Heart left ventricle (tissue), 16 donors: ENCODE measurements at regions of chr2 and their contacts with region 1.

Region 1: DNA sequence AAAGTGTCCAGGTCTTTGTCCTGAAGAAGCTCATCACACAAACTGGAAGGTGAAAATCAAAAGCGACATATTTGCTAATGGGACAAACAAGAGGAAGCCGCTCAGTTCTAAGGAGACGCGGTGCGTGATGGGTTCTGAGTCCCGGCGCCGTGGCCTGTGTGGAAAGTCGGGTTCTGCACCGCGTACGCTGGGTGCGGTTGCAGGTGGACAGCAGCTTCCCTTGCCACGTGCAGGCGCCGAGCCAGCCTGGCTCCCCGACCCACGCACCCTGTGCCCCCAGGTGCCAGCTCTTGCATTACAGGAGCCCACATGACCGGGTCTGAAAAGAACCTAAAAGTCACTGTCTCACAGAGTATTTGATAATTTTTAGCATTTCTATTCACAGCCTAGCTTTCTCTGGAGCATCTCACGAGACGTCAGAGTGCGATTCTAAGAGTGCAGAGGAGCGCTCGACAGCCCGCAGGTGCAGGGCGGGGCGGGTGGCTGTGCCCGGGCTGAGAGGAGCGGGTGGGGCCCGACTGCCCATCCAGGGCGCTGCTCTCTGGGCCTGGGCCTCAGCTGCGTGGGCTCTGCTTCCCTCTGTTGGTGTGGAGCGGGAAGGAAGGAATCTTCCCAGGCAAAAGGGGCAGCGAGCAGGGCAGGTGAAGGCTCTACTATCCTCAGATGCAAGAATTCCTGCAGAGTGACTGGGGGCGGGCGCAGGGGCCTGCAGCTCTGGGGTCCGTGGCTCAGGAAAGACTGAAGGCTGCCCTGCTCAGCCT is 39.4 kb downstream of the MYT1L start:
- DNase-seq: peak in 1 of 5 donors; percentile 40
- ATAC-seq: peak; percentile 73 to 95 (median 92)
- H3K4me3 ChIP-seq: no peak overlapping the region
- H3K27ac ChIP-seq: no peak overlapping the region
- H3K4me1 ChIP-seq: no peaks in the 10 kb centered on the region
- H3K27me3 ChIP-seq: peaks cover 0 to 31% (median 0%) of the 10 kb centered on the region in 9 donors
- CTCF ChIP-seq: peak in 11 of 12 donors; percentile 42 to 70 (median 65)
- POLR2A ChIP-seq: no peak

Region 2: GRCh38 chr2:1854729-1855547 is 436.7 kb before region 1 on chr2:
- intact Hi-C with region 1: loop called in 1 of 10 experiments (anchors 10 kb)
- DNase-seq: no peak
- ATAC-seq: peak; percentile 47 to 95 (median 86)
- H3K4me3 ChIP-seq: peak overlapping the region in 1 of 12 donors; percentile 18
- H3K27ac ChIP-seq: no peak overlapping the region
- H3K4me1 ChIP-seq: peaks cover 0 to 6% (median 0%) of the 10 kb centered on the region in 12 donors
- H3K27me3 ChIP-seq: peaks cover 8 to 58% (median 22%) of the 10 kb centered on the region in 9 donors
- CTCF ChIP-seq: peak; percentile 13 to 70 (median 58)
- POLR2A ChIP-seq: no peak

Region 3: DNA sequence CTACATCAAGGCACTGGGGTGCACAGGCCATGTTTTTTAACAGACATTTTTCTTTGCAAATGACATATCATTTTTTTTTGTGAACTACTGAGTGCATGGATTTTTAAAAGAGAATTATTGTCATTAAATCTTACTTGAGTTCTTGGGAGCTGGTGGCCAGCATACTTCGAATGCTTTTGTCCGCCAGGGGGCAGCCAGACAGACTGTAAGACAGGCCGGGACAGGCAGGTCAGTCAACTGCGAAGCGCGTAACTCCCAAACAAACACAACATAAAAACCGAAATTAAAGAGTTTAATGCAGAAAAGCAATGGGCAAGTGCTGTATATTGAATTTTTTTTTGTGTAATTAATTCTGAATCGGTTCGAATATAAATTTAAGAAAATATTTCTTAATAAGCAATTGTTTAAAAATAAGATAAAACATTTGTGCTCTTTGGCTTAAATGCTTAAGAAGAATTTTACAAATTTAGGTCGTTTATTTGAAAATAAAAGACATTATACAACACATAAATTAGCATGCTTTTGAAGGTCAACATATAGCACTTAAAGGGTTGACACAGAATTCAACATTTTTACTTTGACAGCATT is 405.2 kb before region 1 on chr2:
- intact Hi-C with region 1: loop called in 5 of 10 experiments (anchors 2 to 10 kb)
- DNase-seq: peak; percentile 54 to 80 (median 77)
- ATAC-seq: peak in 2 of 4 donors; percentile 51 to 59
- H3K4me3 ChIP-seq: no peak overlapping the region
- H3K27ac ChIP-seq: no peak overlapping the region
- H3K4me1 ChIP-seq: peaks cover 0 to 9% (median 0%) of the 10 kb centered on the region in 12 donors
- H3K27me3 ChIP-seq: peaks cover 0 to 8% (median 0%) of the 10 kb centered on the region in 9 donors
- CTCF ChIP-seq: peak; percentile 55 to 83 (median 69)
- POLR2A ChIP-seq: no peak

Region 4: GRCh38 chr2:2112416-2113105 is 179.1 kb before region 1 on chr2:
- intact Hi-C with region 1: loop called in 1 of 10 experiments (anchors 5 kb)
- DNase-seq: no peak
- ATAC-seq: no peak
- H3K4me3 ChIP-seq: no peak overlapping the region
- H3K27ac ChIP-seq: no peak overlapping the region
- H3K4me1 ChIP-seq: peaks cover 0 to 17% (median 8%) of the 10 kb centered on the region in 12 donors
- H3K27me3 ChIP-seq: peaks cover 0 to 10% (median 0%) of the 10 kb centered on the region in 9 donors
- CTCF ChIP-seq: no peak
- POLR2A ChIP-seq: no peak

Region 5: DNA sequence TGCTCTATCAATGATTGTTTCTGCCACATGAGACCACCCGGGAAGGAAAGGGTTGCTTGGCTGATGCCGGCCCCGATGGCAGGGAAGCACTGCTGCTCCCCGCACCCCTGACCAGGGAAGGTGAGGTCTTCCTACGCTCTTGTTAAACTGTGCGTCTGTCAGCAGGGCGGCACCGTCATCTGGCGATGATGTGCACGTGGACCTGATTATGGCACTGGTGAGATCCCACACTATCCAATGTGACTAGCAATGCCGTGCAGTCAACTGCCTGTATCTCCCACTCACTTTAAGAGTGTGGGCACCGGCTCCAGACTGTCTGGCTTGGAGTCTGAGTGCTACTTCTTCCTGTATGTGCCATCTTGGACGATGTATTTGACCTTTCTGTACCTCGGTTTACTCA is 169.8 kb before region 1 on chr2:
- intact Hi-C with region 1: loop called in 9 of 10 experiments (anchors 2 to 10 kb)
- DNase-seq: no peak
- ATAC-seq: no peak
- H3K4me3 ChIP-seq: no peak overlapping the region
- H3K27ac ChIP-seq: no peak overlapping the region
- H3K4me1 ChIP-seq: peaks cover 0 to 3% (median 0%) of the 10 kb centered on the region in 12 donors
- H3K27me3 ChIP-seq: no peaks in the 10 kb centered on the region
- CTCF ChIP-seq: no peak
- POLR2A ChIP-seq: no peak

Region 6: GRCh38 chr2:2127467-2127866 is 164.2 kb before region 1 on chr2:
- intact Hi-C with region 1: loop called in 7 of 10 experiments (anchors 5 to 10 kb)
- DNase-seq: no peak
- ATAC-seq: no peak
- H3K4me3 ChIP-seq: no peak overlapping the region
- H3K27ac ChIP-seq: no peak overlapping the region
- H3K4me1 ChIP-seq: no peaks in the 10 kb centered on the region
- H3K27me3 ChIP-seq: peaks cover 0 to 7% (median 0%) of the 10 kb centered on the region in 9 donors
- CTCF ChIP-seq: no peak
- POLR2A ChIP-seq: no peak

Region 7: DNA sequence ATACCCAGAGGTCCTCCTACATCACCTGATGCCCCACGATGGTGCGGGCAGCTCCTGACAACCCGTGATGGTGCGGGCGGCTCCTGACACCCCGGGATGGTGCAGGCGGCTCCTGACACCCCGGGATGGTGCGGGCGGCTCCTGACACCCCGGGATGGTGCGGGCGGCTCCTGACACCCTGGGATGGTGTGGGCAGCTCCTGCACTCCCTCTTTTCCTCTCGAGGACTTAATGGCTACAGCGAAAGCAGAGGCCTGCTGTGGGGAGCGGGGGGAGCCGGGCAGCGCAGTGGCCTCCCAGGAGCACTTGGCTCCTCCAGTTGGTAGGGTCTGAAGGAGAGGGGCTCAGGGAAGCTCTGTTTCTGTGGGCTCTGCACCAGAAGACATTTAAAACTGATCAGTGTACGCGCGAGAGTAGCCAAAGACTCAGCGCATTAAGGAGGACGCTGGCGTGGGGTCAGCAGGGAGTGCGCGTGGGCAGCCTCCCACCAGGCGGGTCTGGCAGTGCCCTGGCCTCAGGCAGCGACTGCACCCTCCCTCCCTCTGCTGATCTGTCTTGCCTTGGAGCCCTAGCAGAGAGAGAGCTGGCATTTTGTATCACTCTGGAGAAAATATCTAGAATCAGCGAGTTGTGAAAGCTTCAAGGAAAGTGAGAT is 503.9 kb after region 1 on chr2:
- intact Hi-C with region 1: no loop called
- DNase-seq: no peak
- ATAC-seq: no peak
- H3K4me3 ChIP-seq: no peak overlapping the region
- H3K27ac ChIP-seq: no peak overlapping the region
- H3K4me1 ChIP-seq: no peaks in the 10 kb centered on the region
- H3K27me3 ChIP-seq: peaks cover 0 to 4% (median 0%) of the 10 kb centered on the region in 9 donors
- CTCF ChIP-seq: no peak
- POLR2A ChIP-seq: no peak